ENCODE measurements at regions of chr16 and their contacts with region 1.

Region 1: GRCh38 chr16:81745704-81746558 is 33.2 kb upstream of the PLCG2 start:
- DNase-seq: peak; percentile 36
- H3K4me3 ChIP-seq: peak overlapping the region; percentile 5 to 40 (median 20)
- H3K27ac ChIP-seq: no peak overlapping the region
- H3K4me1 ChIP-seq: no peaks in the 10 kb centered on the region
- H3K27me3 ChIP-seq: no peaks in the 10 kb centered on the region
- CTCF ChIP-seq: no peak

Region 2: GRCh38 chr16:81767987-81768592 is 22.2 kb after region 1 on chr16:
- CTCF ChIA-PET with region 1: interaction called, 34 read pairs
- dilution Hi-C with region 1: no loop called
- in situ Hi-C with region 1: no loop called
- intact Hi-C with region 1: no loop called
- DNase-seq: no peak
- H3K4me3 ChIP-seq: no peak overlapping the region
- H3K27ac ChIP-seq: no peak overlapping the region
- H3K4me1 ChIP-seq: no peaks in the 10 kb centered on the region
- H3K27me3 ChIP-seq: no peaks in the 10 kb centered on the region
- CTCF ChIP-seq: no peak

Region 3: DNA sequence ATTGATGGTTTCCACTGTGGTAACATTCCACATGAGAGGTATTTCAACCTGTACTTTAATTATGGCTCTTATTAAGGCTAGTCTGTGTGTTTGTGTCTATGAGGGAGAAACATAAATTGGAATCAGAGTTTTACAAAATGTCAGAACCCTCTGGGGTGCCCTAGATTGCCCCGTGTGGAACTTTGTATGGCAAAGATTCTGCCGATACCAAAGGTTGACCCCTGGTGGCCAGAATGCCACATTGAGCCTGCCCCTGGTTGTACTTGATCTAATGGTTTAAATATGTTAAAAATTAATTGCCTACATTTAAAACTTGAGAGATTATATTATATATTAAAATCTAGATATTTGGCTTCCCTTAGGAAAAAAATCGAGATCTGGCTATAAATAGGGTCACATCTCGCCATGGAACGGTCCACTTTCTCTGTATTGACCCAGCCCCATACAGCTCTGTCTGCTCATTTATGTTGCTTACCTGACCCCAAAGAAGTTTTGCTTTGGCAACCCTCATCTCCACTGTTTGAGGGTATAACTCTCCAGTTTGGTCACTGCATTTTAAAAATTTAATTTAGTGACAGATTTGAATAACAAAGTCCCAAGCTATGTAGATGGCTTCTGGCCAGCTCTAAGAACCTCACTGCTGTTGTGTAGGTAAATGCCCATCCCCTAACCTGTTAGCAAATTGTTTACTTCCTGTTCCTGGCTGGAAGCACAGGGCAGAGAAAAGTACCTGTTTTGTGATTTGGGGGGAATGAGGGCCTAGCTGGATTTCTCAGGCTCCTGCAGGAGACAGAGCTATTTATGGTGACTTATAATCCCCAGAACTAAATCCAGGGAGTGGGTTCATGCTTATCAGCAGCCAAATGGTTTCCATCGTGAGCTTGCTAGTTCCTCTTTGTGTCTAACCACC is 128.2 kb after region 1 on chr16:
- CTCF ChIA-PET with region 1: no interaction called
- dilution Hi-C with region 1: no loop called
- in situ Hi-C with region 1: no loop called
- intact Hi-C with region 1: loop called (anchors 5 kb)
- DNase-seq: peak; percentile 27
- H3K4me3 ChIP-seq: no peak overlapping the region
- H3K27ac ChIP-seq: no peak overlapping the region
- H3K4me1 ChIP-seq: no peaks in the 10 kb centered on the region
- H3K27me3 ChIP-seq: no peaks in the 10 kb centered on the region
- CTCF ChIP-seq: peak; percentile 93 to 96

Measured in mammary epithelial cell (primary cell).